Gastrocnemius medialis (tissue), 4 donors: ENCODE measurements at regions of chrX and their contacts with region 1.

Region 1: DNA sequence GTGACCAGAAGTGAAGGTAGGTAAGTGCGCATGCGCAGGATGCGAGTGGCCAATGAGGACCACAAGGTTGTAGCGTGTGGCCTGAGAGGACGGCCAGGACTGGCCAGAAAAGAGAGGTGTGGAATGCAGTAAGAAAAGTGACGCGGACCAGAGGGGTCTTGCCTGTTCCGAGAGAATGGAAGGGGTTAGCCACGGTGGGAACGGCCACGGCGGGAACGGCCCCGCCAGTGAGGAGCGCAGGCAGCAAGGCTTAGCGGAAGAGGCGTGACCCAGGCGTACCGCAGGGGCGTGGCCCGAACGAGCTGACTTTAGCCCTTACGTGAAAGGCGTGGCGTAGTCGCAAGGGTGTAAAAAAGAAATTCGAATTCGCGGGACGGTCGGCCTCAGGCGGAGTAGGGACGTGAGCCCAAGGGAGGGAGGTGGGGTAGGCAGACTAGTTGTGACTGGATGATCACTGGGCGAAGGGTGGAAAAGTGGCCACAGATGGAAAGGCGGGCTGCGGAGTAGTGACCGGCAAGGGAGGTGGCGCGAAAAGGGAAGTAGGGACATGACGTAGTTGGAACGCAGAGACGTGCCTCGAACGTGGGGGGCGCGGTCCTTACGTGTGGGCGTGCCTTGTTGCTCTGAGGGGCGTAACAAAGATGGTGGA is 10.4 kb upstream of the CLTRN start:
- DNase-seq: peak; percentile 89 to 95
- ATAC-seq: peak; percentile 94
- H3K4me3 ChIP-seq: peak overlapping the region; percentile 74 to 85 (median 80)
- H3K27ac ChIP-seq: peak overlapping the region; percentile 93 to 97 (median 96)
- H3K4me1 ChIP-seq: peaks cover 9 to 21% of the 10 kb centered on the region in 2 donors
- H3K27me3 ChIP-seq: no peaks in the 10 kb centered on the region
- CTCF ChIP-seq: no peak
- POLR2A ChIP-seq: peak; percentile 63 to 82

Region 2: DNA sequence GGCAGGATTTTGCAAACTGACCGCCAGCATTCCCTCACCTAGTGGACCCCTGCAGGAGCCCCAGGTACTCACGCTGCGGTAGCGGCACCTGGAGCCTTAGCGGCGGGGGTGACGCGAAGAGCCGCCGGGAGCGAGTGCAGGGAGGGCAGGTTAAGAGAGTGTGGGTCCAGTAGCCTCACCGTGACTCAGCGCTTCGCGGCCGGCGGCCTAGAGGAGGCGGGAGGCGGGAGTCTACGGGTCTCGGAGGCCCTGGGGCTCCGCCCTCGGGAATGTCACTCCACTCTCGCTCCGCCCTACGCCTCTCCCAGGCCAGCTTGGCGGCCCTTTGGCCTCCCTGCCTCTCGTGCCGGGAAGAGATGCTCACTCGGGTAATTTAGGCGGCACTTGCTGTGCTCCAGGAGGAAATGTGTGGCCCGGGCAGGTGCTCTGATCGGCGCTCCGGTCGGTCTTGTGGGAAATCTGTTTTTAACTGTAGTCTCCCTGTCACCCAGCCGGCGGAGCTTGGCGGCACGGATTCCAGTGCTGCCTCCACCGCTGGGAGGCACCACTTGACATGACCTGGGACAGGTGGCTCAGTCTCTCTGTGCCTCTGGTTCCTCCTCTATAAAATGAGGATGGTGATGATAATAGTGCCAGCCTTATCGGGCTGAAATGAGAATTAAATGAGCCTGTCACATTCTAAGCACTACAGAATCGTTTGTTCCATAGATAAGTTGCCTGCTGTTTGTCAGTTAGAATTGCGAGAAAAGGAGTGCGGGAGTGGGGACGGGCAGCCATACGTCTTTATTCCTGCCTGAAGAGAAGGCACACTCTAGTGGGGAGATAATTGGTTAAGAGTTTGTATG is 181.6 kb before region 1 on chrX and contains the start of gene PIR:
- in situ Hi-C with region 1: loop called in 2 of 4 experiments (anchors 10 to 25 kb)
- intact Hi-C with region 1: loop called (anchors 10 kb)
- DNase-seq: peak; percentile 74 to 87
- ATAC-seq: peak; percentile 94
- H3K4me3 ChIP-seq: peak within 1 kb of the TSS; percentile 62 to 73 (median 66)
- H3K27ac ChIP-seq: peak within 1 kb of the TSS; percentile 83 to 93 (median 86)
- H3K4me1 ChIP-seq: no peaks in the 10 kb centered on the region
- H3K27me3 ChIP-seq: no peaks in the 10 kb centered on the region
- CTCF ChIP-seq: peak in 2 of 5 experiments; percentile 45 to 48
- POLR2A ChIP-seq: peak; percentile 69 to 72
- total RNA-seq, gene PIR: 9.4 to 20.2 (median 14.2) TPM

Region 3: DNA sequence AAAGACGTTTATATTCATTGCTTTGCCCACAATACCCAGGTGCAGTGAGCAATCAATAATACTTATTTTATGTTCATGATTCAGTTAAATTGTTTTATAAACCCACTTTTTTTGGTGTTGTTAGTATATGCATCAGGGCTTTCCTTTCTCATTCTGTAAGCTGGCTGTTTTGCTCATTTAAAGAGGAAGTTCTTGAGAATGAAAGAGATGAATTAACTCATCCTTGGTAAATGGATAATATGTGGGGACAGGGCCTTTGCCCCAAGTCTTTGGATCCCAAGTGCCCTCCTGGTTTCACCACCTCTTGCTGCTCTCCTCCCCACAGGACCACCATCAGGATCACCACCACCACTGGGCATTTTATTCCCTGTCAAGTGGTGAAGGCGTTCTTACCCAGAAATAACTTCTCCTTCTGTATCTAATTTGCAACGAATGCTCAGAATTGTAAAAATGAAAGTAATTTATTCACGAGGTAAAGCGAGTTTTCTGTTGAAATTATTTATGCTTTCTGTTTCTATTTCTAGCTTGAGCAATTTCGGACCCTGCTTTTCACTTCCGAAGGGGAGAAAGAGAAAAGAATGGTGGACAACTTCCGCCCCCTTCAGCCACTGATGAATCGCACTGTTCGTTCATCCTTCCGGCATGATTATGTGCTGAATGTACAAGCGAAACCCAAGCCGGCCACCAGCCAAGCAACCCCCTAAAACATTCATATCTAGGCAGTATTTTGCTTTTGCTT is 107.2 kb after region 1 on chrX:
- in situ Hi-C with region 1: no loop called
- intact Hi-C with region 1: no loop called
- DNase-seq: no peak
- ATAC-seq: no peak
- H3K4me3 ChIP-seq: no peak overlapping the region
- H3K27ac ChIP-seq: no peak overlapping the region
- H3K4me1 ChIP-seq: no peaks in the 10 kb centered on the region
- H3K27me3 ChIP-seq: no peaks in the 10 kb centered on the region
- CTCF ChIP-seq: no peak
- POLR2A ChIP-seq: no peak

Region 4: GRCh38 chrX:15854712-15855567 is 180.0 kb after region 1 on chrX and contains the start of gene AP1S2:
- in situ Hi-C with region 1: no loop called
- intact Hi-C with region 1: loop called (anchors 1 kb)
- DNase-seq: peak; percentile 85 to 91
- ATAC-seq: peak; percentile 88
- H3K4me3 ChIP-seq: peak within 1 kb of the TSS; percentile 60 to 74 (median 68)
- H3K27ac ChIP-seq: peak within 1 kb of the TSS; percentile 87 to 94 (median 92)
- H3K4me1 ChIP-seq: peaks cover 15 to 26% of the 10 kb centered on the region in 2 donors
- H3K27me3 ChIP-seq: peaks cover 0 to 18% (median 0%) of the 10 kb centered on the region in 3 donors
- CTCF ChIP-seq: no peak
- POLR2A ChIP-seq: peak; percentile 75 to 82
- total RNA-seq, gene AP1S2: 79.8 to 155 (median 122) TPM

Region 5: DNA sequence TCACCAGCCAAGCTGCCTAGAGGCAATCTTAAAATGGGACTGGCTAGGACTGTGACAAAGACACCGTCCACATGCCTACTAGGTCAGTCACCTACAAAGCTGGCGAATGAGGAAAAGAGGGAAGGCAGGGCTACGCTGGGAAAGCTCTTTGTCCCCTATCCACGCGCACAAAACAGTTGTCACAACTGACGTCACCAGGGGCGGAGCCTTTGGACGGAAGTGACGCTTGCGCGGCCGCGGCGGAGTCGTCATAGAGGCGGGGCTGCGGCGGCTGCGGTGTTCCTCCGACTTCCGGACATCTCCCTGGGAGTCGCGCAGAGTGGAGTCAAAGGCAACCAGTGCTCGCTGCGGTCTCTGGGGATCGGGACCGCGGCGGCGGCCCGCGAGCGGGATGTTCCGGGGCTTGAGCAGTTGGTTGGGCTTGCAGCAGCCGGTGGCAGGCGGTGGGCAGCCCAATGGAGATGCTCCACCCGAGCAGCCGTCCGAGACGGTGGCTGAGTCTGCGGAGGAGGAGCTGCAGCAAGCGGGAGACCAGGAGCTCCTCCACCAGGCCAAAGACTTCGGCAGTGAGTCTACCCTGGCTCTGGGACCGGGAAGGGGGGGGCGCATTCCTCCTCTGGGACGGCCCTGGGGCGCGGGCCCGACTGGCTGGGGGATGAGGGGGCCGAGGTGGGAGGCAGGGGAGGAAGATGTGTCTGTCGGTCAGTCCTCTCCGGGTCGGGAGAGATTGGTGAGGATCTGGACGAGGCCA is 1044.5 kb after region 1 on chrX and contains the start of gene SYAP1:
- in situ Hi-C with region 1: loop called in 2 of 4 experiments (anchors 25 kb)
- intact Hi-C with region 1: loop called (anchors 10 kb)
- DNase-seq: peak; percentile 89 to 94
- ATAC-seq: peak; percentile 97 to 98
- H3K4me3 ChIP-seq: peak within 1 kb of the TSS; percentile 62 to 94 (median 81)
- H3K27ac ChIP-seq: peak within 1 kb of the TSS; percentile 85 to 95 (median 90)
- H3K4me1 ChIP-seq: peaks cover 0 to 27% of the 10 kb centered on the region in 2 donors
- H3K27me3 ChIP-seq: no peaks in the 10 kb centered on the region
- CTCF ChIP-seq: no peak
- POLR2A ChIP-seq: peak; percentile 95
- total RNA-seq, gene SYAP1: 10.6 to 26.4 (median 16.9) TPM